AG04449 (cell line): ENCODE measurements at regions of chr6 and their contacts with region 1.

Region 1: GRCh38 chr6:134925800-134926199 is 24.1 kb downstream of the ALDH8A1 start:
- DNase-seq: no peak
- H3K4me3 ChIP-seq: no peak overlapping the region
- CTCF ChIP-seq: no peak

Region 2: GRCh38 chr6:134640975-134641429 is 284.8 kb before region 1 on chr6:
- CTCF ChIA-PET with region 1: no interaction called
- POLR2A ChIA-PET with region 1: no interaction called
- DNase-seq: peak; percentile 86
- H3K4me3 ChIP-seq: no peak overlapping the region
- CTCF ChIP-seq: peak; percentile 82

Region 3: DNA sequence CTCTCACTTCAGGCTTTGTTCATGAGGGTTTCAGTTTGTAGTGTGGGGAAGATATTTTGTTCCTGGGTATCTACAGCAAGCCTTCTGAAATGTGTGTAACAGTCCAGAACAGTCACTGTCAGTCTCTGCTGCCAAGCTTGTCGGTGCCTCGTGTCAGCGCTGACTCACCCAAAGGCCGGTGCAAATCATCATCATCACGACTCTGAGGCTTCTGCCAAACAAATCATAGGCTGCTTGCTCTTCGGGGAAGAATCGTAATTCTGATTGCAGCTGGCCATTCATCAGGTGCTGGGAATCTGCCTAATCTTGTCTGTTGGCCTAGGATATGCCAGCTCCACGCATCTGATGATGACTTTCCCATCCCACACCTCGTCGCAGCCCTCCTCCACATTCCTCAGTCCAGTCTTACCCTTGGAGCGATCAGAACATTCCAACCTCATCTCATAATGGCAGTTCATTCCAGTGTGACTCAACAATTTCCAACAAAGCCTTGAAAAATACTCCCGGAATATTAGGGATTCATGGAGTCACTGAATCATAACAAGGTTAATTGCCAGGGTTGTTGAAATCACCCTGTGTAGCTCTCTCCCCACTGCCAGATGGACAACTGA is 16.8 kb before region 1 on chr6:
- CTCF ChIA-PET with region 1: interaction called, 10 read pairs
- POLR2A ChIA-PET with region 1: no interaction called
- DNase-seq: peak; percentile 100
- H3K4me3 ChIP-seq: peak overlapping the region; percentile 35
- CTCF ChIP-seq: no peak

Region 4: DNA sequence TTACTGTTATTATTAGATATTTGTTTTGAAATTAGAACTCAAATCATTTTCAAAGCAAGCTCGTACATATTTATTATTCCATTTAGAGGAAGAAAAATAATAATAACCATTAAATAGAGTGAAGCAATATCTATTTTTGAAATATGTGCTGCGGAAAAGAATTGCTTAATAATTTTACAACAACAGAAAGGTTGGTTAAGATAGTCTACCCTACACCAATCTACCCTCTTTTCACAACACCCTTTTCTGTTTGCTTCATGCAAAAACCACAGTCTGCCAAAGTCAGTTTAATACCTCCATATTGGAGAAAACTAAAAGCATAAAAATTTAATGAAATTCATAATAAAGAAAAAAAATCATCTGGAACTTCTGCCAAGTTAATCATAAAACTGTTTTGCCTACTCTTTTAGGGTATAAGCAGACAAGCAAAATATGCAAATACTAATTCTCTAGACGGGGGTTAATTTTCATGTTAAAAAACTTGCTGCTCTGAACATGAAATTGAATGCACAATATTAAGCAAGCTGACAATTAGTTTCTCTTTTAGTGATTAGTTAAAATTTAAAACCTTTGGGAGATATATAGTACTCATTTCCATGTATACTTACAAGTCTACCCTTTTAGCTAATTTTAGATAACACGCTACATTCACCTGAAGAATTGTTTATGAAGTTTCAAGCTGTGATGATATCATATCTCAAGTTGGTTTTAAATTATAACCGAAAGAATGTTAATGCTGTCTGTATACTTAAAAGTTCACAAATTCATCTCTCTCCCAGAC is 471.6 kb after region 1 on chr6:
- CTCF ChIA-PET with region 1: no interaction called
- POLR2A ChIA-PET with region 1: no interaction called
- DNase-seq: no peak
- H3K4me3 ChIP-seq: no peak overlapping the region
- CTCF ChIP-seq: no peak